ENCODE measurements at regions of chr12 and their contacts with region 1.

Region 1: GRCh38 chr12:27940756-27941402 is 31.7 kb downstream of the PTHLH start:
- DNase-seq: peak; percentile 63 to 88 (median 81)
- ATAC-seq: peak; percentile 70 to 74
- H3K4me3 ChIP-seq: no peak overlapping the region
- H3K27ac ChIP-seq: no peak overlapping the region
- H3K4me1 ChIP-seq: no peaks in the 10 kb centered on the region
- H3K27me3 ChIP-seq: no peaks in the 10 kb centered on the region

Region 2: DNA sequence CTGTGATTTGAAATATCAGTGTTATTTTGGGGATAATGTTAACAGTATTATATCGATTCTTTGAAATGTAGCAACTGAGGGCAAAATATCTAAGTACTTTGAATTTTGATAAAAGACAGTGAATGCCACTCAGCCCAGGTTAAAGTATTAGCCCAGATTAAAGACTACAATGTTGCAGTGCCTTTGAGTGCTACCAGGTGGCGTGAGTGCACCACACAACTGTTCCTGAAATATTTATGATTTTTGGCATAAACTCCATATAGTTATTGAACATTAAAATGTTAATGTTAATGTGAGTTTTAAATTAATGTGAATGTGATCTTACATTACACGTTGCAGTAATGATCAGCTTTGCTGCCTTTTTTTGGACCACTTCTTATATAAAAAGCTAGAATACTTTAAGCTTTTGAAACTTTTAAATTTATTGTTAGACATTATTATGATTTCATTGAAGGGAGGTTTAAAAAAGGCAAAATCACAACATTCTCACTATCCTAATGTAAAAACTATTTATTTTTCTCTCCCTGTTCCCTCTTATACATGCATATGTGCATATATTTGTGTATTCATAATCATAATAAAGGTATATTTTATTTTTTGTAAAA is 207.7 kb before region 1 on chr12:
- intact Hi-C with region 1: loop called (anchors 5 to 10 kb)
- DNase-seq: no peak
- ATAC-seq: no peak
- H3K4me3 ChIP-seq: no peak overlapping the region
- H3K27ac ChIP-seq: no peak overlapping the region
- H3K4me1 ChIP-seq: no peaks in the 10 kb centered on the region
- H3K27me3 ChIP-seq: no peaks in the 10 kb centered on the region

Region 3: DNA sequence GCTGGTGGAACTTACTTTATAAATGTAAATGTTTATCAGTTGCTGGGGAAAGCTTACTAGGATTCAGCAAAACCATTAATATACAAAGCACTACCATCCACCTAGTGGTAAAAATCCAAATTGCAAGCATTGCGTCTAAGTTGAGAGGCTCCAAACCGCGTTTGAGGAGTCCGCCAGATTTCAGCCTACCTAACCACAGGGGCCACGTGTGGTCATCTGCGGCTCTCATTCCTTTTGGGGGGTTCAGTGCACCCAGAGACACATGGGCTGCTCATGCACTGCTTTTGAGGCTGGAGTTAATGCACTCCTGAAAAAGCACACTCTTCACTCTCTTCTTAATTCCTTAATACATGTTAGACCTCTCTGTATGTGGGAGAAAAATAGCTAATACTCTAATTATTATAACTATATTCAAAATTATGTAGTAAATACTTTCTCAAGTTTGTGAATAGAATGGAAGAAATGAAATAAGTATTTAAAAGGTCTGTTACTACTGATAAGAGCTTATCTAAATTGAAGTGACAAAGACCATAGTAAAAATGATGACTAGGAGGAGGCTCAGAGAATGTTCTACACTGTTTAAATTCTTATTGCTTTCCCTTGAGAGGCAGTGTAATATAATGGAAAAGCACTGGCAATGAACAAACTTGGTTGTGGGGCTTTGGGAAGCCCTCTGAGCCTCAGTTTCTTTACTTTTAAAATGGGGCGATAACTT is 119.5 kb before region 1 on chr12:
- intact Hi-C with region 1: loop called in 1 of 4 experiments (anchors 10 kb)
- DNase-seq: peak in 1 of 3 donors; percentile 41
- ATAC-seq: peak; percentile 64 to 70
- H3K4me3 ChIP-seq: no peak overlapping the region
- H3K27ac ChIP-seq: no peak overlapping the region
- H3K4me1 ChIP-seq: no peaks in the 10 kb centered on the region
- H3K27me3 ChIP-seq: no peaks in the 10 kb centered on the region

Measured in right cardiac atrium (tissue), 5 donors.